Breast epithelium (tissue), 4 donors: ENCODE measurements at regions of chr4 and their contacts with region 1.

Region 1: GRCh38 chr4:23135792-23136645 is 443.3 kb downstream of the GBA3 start:
- DNase-seq: no peak
- H3K4me3 ChIP-seq: no peak overlapping the region
- H3K27ac ChIP-seq: no peak overlapping the region
- H3K4me1 ChIP-seq: no peaks in the 10 kb centered on the region
- H3K27me3 ChIP-seq: no peaks in the 10 kb centered on the region
- CTCF ChIP-seq: peak; percentile 38 to 60 (median 47)
- POLR2A ChIP-seq: no peak

Region 2: GRCh38 chr4:23697722-23698121 is 561.7 kb after region 1 on chr4:
- intact Hi-C with region 1: loop called (anchors 5 kb)
- DNase-seq: no peak
- H3K4me3 ChIP-seq: no peak overlapping the region
- H3K27ac ChIP-seq: no peak overlapping the region
- H3K4me1 ChIP-seq: no peaks in the 10 kb centered on the region
- H3K27me3 ChIP-seq: no peaks in the 10 kb centered on the region
- CTCF ChIP-seq: no peak
- POLR2A ChIP-seq: no peak